Activated CD8-positive, alpha-beta T cell treated with anti-CD3 and anti-CD28 coated beads, Interleukin-2, amount 10 ng/mL, durations not matched to agents 7 days and 5 days (primary cell): ENCODE measurements at regions of chr11 and their contacts with region 1.

Region 1: DNA sequence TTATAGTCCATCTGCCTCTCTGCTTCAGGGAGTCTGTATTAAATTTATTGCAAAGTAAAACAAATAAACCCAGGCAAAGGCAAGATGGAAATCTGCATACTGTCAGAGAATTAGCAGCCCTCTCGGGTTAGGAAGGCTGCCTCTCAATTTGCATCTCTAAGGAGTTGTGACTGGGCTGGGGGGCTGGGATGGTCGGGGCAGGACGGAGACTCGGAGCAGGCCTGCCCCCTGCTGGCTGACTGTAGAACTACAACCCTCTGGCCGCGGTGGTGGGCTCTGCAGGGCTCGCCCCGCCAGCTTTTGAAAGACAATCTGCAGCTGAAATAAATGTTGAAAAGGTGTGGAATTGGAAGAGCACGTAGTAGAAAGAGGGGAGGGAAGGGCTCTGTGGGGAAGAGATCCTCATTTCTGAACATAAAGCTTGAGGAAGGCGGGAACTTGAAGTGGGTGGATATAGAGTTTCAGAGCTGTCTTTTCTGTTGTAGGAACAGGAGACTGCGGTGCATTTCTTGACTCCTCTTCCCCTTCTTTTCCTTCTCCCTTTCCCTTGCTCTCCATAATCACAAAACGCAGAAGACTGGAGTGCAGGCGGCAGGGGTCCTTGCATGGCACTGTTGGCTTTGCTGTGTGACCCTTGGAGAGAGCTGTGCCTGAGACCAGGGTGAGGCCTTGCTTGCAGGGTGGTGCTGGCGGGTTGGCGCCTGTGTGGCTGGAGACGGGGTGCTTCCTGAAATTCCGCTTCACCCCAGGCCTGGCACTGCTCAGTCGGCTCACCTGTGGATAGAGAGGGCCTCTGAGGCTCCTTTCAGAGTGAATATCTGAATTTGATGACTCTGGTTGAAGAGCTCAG is 22.6 kb upstream of the PKNOX2 start:
- DNase-seq: peak; percentile 63
- ATAC-seq: peak; percentile 89
- H3K4me3 Mint-ChIP-seq: no peak overlapping the region
- H3K27ac Mint-ChIP-seq: no peak overlapping the region
- H3K4me1 Mint-ChIP-seq: no peaks in the 10 kb centered on the region
- H3K27me3 Mint-ChIP-seq: peaks cover 23% of the 10 kb centered on the region

Region 2: DNA sequence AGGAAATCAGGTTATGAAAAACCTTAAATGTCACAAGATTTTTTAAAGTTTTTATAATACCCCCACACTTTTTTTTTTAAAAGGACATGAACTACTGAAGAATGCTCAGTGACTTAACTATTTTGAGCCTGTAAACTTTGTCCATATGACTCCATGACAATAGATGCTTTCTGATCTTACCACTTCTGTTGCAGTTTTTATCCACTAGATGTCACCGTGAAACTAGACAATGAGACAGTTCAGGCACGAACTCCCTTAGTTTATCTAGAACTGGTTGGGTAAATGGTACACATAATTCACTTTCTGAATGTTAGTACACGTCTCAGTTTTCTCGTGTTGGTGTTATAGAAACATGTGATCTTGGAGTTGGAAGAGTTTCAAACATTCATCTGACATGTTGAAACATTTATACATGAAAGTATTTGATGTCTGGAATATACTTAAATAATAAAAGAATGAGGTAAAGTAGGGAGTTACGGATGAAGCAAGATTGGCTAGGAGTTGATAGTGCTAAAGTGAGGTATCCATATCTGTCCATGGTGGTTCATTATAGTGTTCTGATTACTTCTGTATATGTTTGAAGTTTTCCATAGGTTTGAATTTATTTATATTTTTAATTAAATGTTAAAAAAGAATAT is 179.8 kb before region 1 on chr11:
- CTCF ChIA-PET with region 1: interaction called, 21 read pairs
- POLR2A ChIA-PET with region 1: no interaction called
- DNase-seq: peak; percentile 43
- ATAC-seq: peak; percentile 94
- H3K4me3 Mint-ChIP-seq: no peak overlapping the region
- H3K27ac Mint-ChIP-seq: no peak overlapping the region
- H3K4me1 Mint-ChIP-seq: no peaks in the 10 kb centered on the region
- H3K27me3 Mint-ChIP-seq: no peaks in the 10 kb centered on the region

Region 3: DNA sequence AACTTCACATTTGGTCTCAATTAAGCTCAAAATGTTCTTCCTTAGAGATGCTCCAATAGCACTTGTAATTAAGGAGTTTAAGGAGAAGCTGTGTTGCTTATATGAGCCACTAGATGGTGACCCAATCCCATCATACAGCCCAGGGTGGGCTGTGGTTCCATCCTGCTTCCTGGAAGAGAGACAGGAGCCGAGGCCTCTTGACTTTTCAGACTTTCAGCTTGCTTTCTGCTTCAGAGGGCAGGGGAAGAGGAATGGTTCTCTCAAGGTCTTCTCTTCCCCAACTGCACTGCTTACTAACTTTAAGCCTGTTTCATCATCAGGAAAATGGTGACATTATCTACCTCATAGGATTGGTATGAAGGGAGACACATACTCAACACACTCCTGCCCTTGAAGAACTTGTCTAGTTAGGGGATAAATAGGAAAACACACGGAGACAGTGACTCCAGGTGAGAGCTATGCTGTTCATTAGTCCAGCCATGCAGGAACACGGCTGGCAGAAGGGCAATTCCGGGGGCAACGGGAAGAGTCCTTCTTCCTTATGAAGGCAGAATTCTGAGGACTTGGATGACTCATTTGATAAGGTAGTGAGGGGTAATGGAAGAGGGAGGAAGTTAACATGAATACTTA is 50.5 kb before region 1 on chr11:
- CTCF ChIA-PET with region 1: interaction called, 34 read pairs
- POLR2A ChIA-PET with region 1: interaction called, 3 read pairs
- DNase-seq: no peak
- ATAC-seq: no peak
- H3K4me3 Mint-ChIP-seq: no peak overlapping the region
- H3K27ac Mint-ChIP-seq: peak overlapping the region; percentile 20
- H3K4me1 Mint-ChIP-seq: peaks cover 8% of the 10 kb centered on the region
- H3K27me3 Mint-ChIP-seq: no peaks in the 10 kb centered on the region